ENCODE measurements at regions of chr4 and their contacts with region 1.

Region 1: GRCh38 chr4:53866055-53866454 is 198.3 kb downstream of the CHIC2 start:
- DNase-seq: no peak
- H3K4me3 ChIP-seq: no peak overlapping the region
- H3K27ac ChIP-seq: no peak overlapping the region
- H3K4me1 ChIP-seq: no peaks in the 10 kb centered on the region
- H3K27me3 ChIP-seq: no peaks in the 10 kb centered on the region
- CTCF ChIP-seq: no peak
- EP300 ChIP-seq: no peak
- POLR2A ChIP-seq: no peak

Region 2: GRCh38 chr4:52172166-52172565 is 1693.9 kb before region 1 on chr4:
- in situ Hi-C with region 1: no loop called
- intact Hi-C with region 1: loop called (anchors 10 kb)
- DNase-seq: no peak
- H3K4me3 ChIP-seq: no peak overlapping the region
- H3K27ac ChIP-seq: no peak overlapping the region
- H3K4me1 ChIP-seq: peaks cover 0 to 8% (median 1%) of the 10 kb centered on the region in 4 donors
- H3K27me3 ChIP-seq: no peaks in the 10 kb centered on the region
- CTCF ChIP-seq: peak in 2 of 5 experiments; percentile 7 to 18
- EP300 ChIP-seq: no peak
- POLR2A ChIP-seq: no peak